Panc1 (cell line): ENCODE measurements at regions of chr12 and their contacts with region 1.

Region 1: GRCh38 chr12:60660248-60660647 is 1064.4 kb downstream of the SLC16A7 start:
- DNase-seq: no peak
- ATAC-seq: no peak
- H3K4me3 ChIP-seq: no peak overlapping the region
- H3K27ac ChIP-seq: no peak overlapping the region
- H3K4me1 ChIP-seq: no peaks in the 10 kb centered on the region
- H3K27me3 ChIP-seq: no peaks in the 10 kb centered on the region
- CTCF ChIP-seq: no peak

Region 2: GRCh38 chr12:60577607-60578006 is 82.6 kb before region 1 on chr12:
- CTCF ChIA-PET with region 1: no interaction called
- POLR2A ChIA-PET with region 1: interaction called, 10 read pairs
- in situ Hi-C with region 1: no loop called
- intact Hi-C with region 1: no loop called
- DNase-seq: no peak
- ATAC-seq: no peak
- H3K4me3 ChIP-seq: no peak overlapping the region
- H3K27ac ChIP-seq: no peak overlapping the region
- H3K4me1 ChIP-seq: no peaks in the 10 kb centered on the region
- H3K27me3 ChIP-seq: no peaks in the 10 kb centered on the region
- CTCF ChIP-seq: no peak

Region 3: DNA sequence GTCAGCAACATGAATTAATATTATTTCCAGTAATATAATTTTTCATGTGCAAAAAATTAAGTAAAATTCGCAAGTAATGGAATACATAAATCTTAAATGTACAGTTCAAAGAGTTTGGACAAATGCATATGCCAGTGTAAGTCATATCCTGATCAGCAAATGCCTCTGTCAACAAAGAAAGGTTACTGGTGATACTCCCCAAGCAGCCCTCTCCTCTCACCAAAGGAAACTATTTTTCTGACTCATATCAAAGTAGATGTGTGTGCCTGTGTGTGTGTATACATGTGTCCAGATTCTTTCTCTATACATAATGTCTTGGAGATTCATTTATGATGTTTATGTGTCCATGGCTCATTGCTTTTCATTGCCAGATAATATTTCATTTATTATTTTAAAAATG is 29.5 kb before region 1 on chr12:
- CTCF ChIA-PET with region 1: no interaction called
- POLR2A ChIA-PET with region 1: no interaction called
- in situ Hi-C with region 1: no loop called
- intact Hi-C with region 1: no loop called
- DNase-seq: no peak
- ATAC-seq: no peak
- H3K4me3 ChIP-seq: no peak overlapping the region
- H3K27ac ChIP-seq: no peak overlapping the region
- H3K4me1 ChIP-seq: no peaks in the 10 kb centered on the region
- H3K27me3 ChIP-seq: no peaks in the 10 kb centered on the region
- CTCF ChIP-seq: no peak